ENCODE measurements at regions of chr2 and their contacts with region 1.

Region 1: DNA sequence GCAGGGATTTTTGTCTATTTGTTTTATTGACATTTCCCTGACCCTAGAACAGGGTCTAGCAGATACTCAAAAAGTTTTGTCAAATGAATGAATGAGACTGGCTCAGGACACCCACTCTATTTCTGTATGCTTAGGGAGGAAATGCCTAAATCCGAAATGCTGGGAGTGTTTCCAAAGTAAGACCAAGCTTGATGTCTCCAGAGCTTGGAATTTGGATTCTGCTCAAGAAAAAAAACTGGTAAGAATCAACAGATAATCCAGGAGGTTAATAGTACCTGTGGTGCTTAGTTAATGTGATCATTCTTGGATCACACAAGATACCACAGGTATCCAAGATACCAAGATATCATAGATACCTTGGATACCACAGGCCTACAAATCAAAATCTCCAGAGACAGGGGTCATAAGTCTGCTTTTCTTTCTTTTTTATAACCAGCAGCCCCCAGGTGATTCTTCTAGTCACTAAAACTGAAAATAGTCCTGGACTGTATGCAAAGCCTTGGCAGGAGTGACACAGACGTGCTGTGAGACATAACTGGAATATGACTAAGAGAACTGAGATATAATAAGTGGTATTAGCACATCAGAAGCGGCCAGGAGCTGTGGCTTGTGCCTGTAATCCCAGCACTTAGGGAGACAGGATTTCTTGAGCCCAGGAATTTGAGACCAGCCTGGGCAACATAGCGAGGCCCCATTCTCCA is 39.9 kb upstream of the SP3 start:
- DNase-seq: no peak
- H3K4me3 ChIP-seq: no peak overlapping the region
- H3K4me3 Mint-ChIP-seq: peak overlapping the region; percentile 56
- H3K27ac Mint-ChIP-seq: peak overlapping the region; percentile 81
- H3K4me1 ChIP-seq: peaks cover 71% of the 10 kb centered on the region
- H3K4me1 Mint-ChIP-seq: peaks cover 73% of the 10 kb centered on the region
- H3K27me3 ChIP-seq: no peaks in the 10 kb centered on the region
- H3K27me3 Mint-ChIP-seq: no peaks in the 10 kb centered on the region
- CTCF ChIP-seq: no peak

Region 2: DNA sequence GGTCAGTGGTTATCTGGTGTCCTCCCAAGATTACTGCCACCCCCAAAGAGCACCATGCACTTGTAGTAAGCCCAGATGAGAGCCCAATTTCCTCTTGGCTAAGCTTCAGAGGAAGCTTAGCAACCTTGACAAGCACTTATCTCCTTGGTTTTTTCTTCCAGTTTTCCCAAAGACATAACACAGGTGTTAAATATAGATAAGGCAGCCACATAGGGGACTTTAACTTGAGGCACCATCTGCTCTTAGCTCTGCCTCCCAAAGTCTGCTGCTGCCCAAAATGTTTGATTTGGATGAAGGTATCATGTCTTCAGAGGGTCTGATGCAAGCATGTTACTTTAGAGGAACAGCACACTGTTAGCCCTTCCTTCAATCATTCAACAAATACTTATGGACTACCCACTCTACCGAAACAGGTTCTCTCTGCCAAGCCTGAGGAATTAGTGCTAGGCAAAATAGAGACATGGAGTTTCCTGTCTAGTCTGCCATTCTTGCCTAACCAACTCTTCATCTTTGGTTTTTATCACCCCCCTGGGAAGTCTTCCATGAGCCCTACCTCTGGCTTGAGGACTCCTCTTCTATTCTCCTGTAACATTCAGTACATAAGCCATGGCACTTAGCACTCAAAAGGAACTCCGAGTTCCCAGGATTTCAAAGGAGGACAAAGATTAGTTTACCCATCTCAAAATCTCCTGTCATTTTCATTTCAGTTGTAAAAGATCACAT is 113.6 kb before region 1 on chr2:
- CTCF ChIA-PET with region 1: no interaction called
- POLR2A ChIA-PET with region 1: no interaction called
- intact Hi-C with region 1: no loop called
- DNase-seq: no peak
- H3K4me3 ChIP-seq: no peak overlapping the region
- H3K4me3 Mint-ChIP-seq: no peak overlapping the region
- H3K27ac Mint-ChIP-seq: no peak overlapping the region
- H3K4me1 ChIP-seq: no peaks in the 10 kb centered on the region
- H3K4me1 Mint-ChIP-seq: no peaks in the 10 kb centered on the region
- H3K27me3 ChIP-seq: no peaks in the 10 kb centered on the region
- H3K27me3 Mint-ChIP-seq: no peaks in the 10 kb centered on the region
- CTCF ChIP-seq: no peak

Region 3: DNA sequence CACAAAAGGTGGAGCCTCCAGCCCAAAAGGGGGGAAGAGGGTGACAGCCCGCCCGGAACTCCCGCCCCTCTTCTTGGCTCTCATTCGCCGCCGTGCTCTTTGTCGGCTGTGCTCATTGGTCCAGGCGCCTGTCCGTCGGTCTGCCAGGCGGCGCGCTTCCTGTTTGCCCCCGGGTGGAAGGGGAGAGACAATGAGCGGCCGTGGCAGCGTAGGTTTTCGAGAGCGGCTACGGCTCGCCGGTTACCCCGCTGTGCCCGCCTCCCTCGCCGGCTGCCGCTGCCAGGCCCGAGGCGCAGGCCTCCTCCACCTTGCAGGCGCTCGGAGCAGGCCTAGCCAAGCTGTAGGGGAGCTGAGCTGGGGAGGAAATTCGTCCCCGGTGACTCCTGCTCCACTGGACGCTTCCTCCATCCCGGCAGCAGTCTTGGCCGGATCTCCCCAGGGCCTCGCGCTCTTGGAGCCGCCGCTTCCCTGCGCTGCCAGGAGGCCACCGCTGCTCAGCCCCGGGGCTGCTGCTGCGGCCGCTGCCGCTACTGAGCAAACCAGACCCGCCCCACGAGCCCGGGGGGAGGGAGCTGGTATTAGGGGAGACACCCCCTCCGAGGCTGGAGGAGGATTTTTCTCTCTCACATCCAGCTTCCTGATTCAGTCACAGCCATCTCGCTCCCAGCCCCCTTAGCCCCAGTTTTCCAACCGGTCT is 39.6 kb before region 1 on chr2 and contains the start of gene SP3:
- CTCF ChIA-PET with region 1: interaction called, 11 read pairs
- POLR2A ChIA-PET with region 1: interaction called, 14 read pairs
- intact Hi-C with region 1: loop called (anchors 1 kb)
- DNase-seq: peak; percentile 97 to 98
- H3K4me3 ChIP-seq: peak within 1 kb of the TSS; percentile 98
- H3K4me3 Mint-ChIP-seq: peak within 1 kb of the TSS; percentile 98
- H3K27ac Mint-ChIP-seq: peak within 1 kb of the TSS; percentile 91
- H3K4me1 ChIP-seq: peaks cover 45% of the 10 kb centered on the region
- H3K4me1 Mint-ChIP-seq: peaks cover 39% of the 10 kb centered on the region
- H3K27me3 ChIP-seq: no peaks in the 10 kb centered on the region
- H3K27me3 Mint-ChIP-seq: no peaks in the 10 kb centered on the region
- CTCF ChIP-seq: no peak
- total RNA-seq, gene SP3: 108 and 111 TPM in 2 replicates

Region 4: GRCh38 chr2:174025271-174026123 is 20.4 kb after region 1 on chr2:
- CTCF ChIA-PET with region 1: no interaction called
- POLR2A ChIA-PET with region 1: interaction called, 4 read pairs
- intact Hi-C with region 1: loop called (anchors 1 kb)
- DNase-seq: no peak
- H3K4me3 ChIP-seq: no peak overlapping the region
- H3K4me3 Mint-ChIP-seq: peak overlapping the region; percentile 68
- H3K27ac Mint-ChIP-seq: peak overlapping the region; percentile 92
- H3K4me1 ChIP-seq: peaks cover 62% of the 10 kb centered on the region
- H3K4me1 Mint-ChIP-seq: peaks cover 58% of the 10 kb centered on the region
- H3K27me3 ChIP-seq: no peaks in the 10 kb centered on the region
- H3K27me3 Mint-ChIP-seq: no peaks in the 10 kb centered on the region
- CTCF ChIP-seq: no peak

Region 5: GRCh38 chr2:174039551-174040416 is 34.7 kb after region 1 on chr2:
- CTCF ChIA-PET with region 1: interaction called, 4 read pairs
- POLR2A ChIA-PET with region 1: no interaction called
- intact Hi-C with region 1: loop called (anchors 1 kb)
- DNase-seq: peak; percentile 87
- H3K4me3 ChIP-seq: no peak overlapping the region
- H3K4me3 Mint-ChIP-seq: no peak overlapping the region
- H3K27ac Mint-ChIP-seq: peak overlapping the region; percentile 40
- H3K4me1 ChIP-seq: peaks cover 23% of the 10 kb centered on the region
- H3K4me1 Mint-ChIP-seq: peaks cover 17% of the 10 kb centered on the region
- H3K27me3 ChIP-seq: no peaks in the 10 kb centered on the region
- H3K27me3 Mint-ChIP-seq: no peaks in the 10 kb centered on the region
- CTCF ChIP-seq: peak; percentile 78 to 82

Region 6: GRCh38 chr2:174078275-174078674 is 73.2 kb after region 1 on chr2:
- CTCF ChIA-PET with region 1: no interaction called
- POLR2A ChIA-PET with region 1: no interaction called
- intact Hi-C with region 1: loop called (anchors 1 kb)
- DNase-seq: no peak
- H3K4me3 ChIP-seq: no peak overlapping the region
- H3K4me3 Mint-ChIP-seq: no peak overlapping the region
- H3K27ac Mint-ChIP-seq: peak overlapping the region; percentile 21
- H3K4me1 ChIP-seq: peaks cover 43% of the 10 kb centered on the region
- H3K4me1 Mint-ChIP-seq: peaks cover 40% of the 10 kb centered on the region
- H3K27me3 ChIP-seq: no peaks in the 10 kb centered on the region
- H3K27me3 Mint-ChIP-seq: no peaks in the 10 kb centered on the region
- CTCF ChIP-seq: peak in 1 of 2 experiments; percentile 36

Measured in Caco-2 (cell line).